ENCODE measurements at regions of chr9 and their contacts with region 1.

Region 1: DNA sequence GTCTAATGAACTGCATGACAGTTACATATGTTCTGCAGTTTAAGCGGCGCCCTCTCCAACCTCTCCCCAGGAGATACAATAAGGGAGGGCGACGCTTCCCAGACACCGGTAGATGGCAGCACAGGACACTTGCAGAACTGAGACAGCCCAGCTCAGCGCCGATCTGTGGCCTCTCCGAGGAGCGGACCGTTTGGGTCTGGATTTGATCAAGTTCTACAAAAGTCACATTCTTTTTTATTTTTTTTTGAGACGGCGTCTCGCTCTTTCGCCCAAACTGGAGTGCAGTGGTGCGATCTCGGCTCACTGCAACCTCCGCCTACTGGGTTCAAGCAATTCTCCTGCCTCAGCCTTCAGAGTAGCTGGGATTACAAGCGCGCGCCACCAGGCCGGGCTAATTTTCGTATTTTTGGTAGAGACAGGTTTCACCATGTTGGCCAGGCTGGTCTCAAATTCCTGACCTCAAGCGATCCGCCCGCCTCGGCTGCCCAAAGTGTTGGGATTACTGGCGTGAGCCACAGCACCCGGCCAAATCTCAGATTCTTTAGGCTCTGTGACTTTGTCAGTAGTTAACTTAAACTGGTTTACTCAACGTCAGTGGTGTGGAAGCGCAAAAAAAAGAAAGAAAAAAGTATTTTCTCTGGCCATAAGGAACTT is 1.4 kb upstream of the ATOSB start:
- DNase-seq: peak; percentile 81
- H3K4me3 ChIP-seq: peak overlapping the region; percentile 76 to 85
- H3K27ac ChIP-seq: peak overlapping the region in 1 of 2 experiments; percentile 97; a peak in 1 of 4 replicates
- H3K4me1 ChIP-seq: peaks cover 23 to 29% of the 10 kb centered on the region in 2 experiments
- H3K27me3 ChIP-seq: no peaks in the 10 kb centered on the region
- CTCF ChIP-seq: peak; percentile 97
- EP300 ChIP-seq: no peak
- RAD21 ChIP-seq: peak; percentile 93

Region 2: DNA sequence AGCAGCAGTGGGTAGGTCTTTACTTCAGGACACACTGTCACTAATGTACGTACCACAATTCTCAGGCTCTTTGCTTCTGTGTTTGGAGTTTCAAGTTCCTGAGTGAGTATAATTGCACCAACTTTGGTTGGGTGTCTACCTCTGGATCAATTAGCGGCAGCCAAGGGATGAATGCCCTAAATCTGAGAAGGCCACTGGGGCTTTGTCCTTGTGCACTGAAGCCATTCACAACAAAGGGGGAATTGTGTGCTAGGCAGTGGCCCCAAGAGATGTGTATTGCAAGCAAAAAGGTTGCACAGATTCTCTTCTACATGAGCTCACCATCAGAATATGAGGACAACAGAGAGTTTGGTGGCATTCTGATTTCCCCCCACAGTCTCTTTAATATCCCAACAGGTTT is 162.8 kb before region 1 on chr9:
- CTCF ChIA-PET with region 1: no interaction called
- POLR2A ChIA-PET with region 1: no interaction called
- DNase-seq: no peak
- H3K4me3 ChIP-seq: no peak overlapping the region
- H3K27ac ChIP-seq: no peak overlapping the region
- H3K4me1 ChIP-seq: peaks cover 0 to 3% of the 10 kb centered on the region in 2 experiments; a peak in 1 of 4 replicates
- H3K27me3 ChIP-seq: peaks cover 29% of the 10 kb centered on the region
- CTCF ChIP-seq: no peak
- EP300 ChIP-seq: no peak
- RAD21 ChIP-seq: no peak

Region 3: GRCh38 chr9:35102926-35103659 is 13.9 kb before region 1 on chr9 and contains the start of gene STOML2:
- CTCF ChIA-PET with region 1: interaction called, 13 read pairs
- POLR2A ChIA-PET with region 1: interaction called, 35 read pairs
- DNase-seq: peak; percentile 96
- H3K4me3 ChIP-seq: peak within 1 kb of the TSS; percentile 75 to 84
- H3K27ac ChIP-seq: peak within 1 kb of the TSS; percentile 86 to 94
- H3K4me1 ChIP-seq: peaks cover 15 to 25% of the 10 kb centered on the region in 2 experiments; a peak in 3 of 4 replicates
- H3K27me3 ChIP-seq: no peaks in the 10 kb centered on the region
- CTCF ChIP-seq: no peak
- EP300 ChIP-seq: no peak; a peak in 1 of 4 replicates
- RAD21 ChIP-seq: no peak
- polyA plus RNA-seq, gene STOML2: 229 and 232 TPM in 2 replicates

Region 4: GRCh38 chr9:35142037-35142436 is 25.0 kb after region 1 on chr9:
- CTCF ChIA-PET with region 1: no interaction called
- POLR2A ChIA-PET with region 1: no interaction called
- DNase-seq: no peak
- H3K4me3 ChIP-seq: no peak overlapping the region
- H3K27ac ChIP-seq: no peak overlapping the region
- H3K4me1 ChIP-seq: no peaks in the 10 kb centered on the region
- H3K27me3 ChIP-seq: no peaks in the 10 kb centered on the region
- CTCF ChIP-seq: no peak
- EP300 ChIP-seq: no peak
- RAD21 ChIP-seq: no peak

Region 5: DNA sequence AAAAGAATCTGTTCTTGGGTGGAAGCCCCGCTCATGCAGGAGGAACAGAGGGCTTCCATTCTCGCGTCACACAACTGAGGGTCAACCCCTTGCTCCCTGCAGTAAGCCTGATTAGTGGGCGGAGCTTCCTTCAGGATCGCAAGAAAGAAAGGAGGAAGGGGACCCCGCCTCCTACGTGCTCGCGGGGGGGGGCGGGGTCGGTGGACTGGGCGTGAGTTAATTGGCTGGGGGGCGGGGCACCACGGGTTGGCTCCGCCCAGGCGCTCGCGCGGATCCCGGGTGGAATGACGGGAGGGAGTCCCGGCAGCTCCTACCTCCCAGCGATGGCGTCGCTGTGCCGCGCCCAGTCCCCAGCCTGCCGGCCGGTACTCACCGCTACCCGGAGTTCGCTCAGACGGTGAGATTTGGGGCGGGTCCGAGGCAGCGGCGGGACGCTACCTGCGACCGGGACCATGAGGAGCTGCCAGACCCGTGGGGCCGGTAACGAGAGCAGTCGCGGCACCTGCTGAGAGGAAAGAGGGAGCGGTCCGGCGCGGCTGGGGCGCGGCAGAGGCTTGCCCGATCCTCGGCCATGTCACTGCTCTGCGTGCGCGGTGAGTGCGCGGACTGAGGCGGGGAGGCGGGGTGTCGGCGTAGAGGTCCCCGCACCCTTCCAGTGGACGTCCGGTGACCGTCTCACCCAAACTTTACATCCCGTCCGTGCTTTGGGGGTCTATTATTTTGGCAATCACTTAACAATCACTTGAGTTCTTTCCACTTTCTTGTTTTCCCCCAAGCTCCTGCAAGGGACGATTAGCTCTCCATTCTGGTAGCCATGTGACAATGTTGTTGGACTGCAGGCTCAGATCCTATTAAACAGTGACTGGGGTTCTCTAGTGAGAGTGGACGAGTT is 44.9 kb after region 1 on chr9 and contains the start of gene UNC13B:
- CTCF ChIA-PET with region 1: interaction called, 14 read pairs
- POLR2A ChIA-PET with region 1: interaction called, 8 read pairs
- DNase-seq: peak; percentile 99
- H3K4me3 ChIP-seq: peak within 1 kb of the TSS; percentile 70 to 86
- H3K27ac ChIP-seq: peak within 1 kb of the TSS; percentile 46 to 88; a peak in 3 of 4 replicates
- H3K4me1 ChIP-seq: peaks cover 3 to 5% of the 10 kb centered on the region in 2 experiments; a peak in 1 of 4 replicates
- H3K27me3 ChIP-seq: no peaks in the 10 kb centered on the region
- CTCF ChIP-seq: no peak; the same call in 1 of the 2 replicates
- EP300 ChIP-seq: no peak
- RAD21 ChIP-seq: no peak
- polyA plus RNA-seq, gene UNC13B: 8.1 and 9.8 TPM in 2 replicates

Region 6: GRCh38 chr9:35258676-35259474 is 141.8 kb after region 1 on chr9:
- CTCF ChIA-PET with region 1: interaction called, 55 read pairs
- POLR2A ChIA-PET with region 1: no interaction called
- DNase-seq: peak; percentile 42
- H3K4me3 ChIP-seq: no peak overlapping the region
- H3K27ac ChIP-seq: no peak overlapping the region
- H3K4me1 ChIP-seq: no peaks in the 10 kb centered on the region
- H3K27me3 ChIP-seq: no peaks in the 10 kb centered on the region
- CTCF ChIP-seq: peak; percentile 72
- EP300 ChIP-seq: no peak
- RAD21 ChIP-seq: peak; percentile 83

Region 7: GRCh38 chr9:35415386-35416096 is 298.5 kb after region 1 on chr9:
- CTCF ChIA-PET with region 1: interaction called, 11 read pairs
- POLR2A ChIA-PET with region 1: no interaction called
- DNase-seq: no peak
- H3K4me3 ChIP-seq: no peak overlapping the region
- H3K27ac ChIP-seq: no peak overlapping the region
- H3K4me1 ChIP-seq: no peaks in the 10 kb centered on the region
- H3K27me3 ChIP-seq: no peaks in the 10 kb centered on the region
- CTCF ChIP-seq: no peak; the same call in 1 of the 2 replicates
- EP300 ChIP-seq: no peak
- RAD21 ChIP-seq: no peak

Region 8: DNA sequence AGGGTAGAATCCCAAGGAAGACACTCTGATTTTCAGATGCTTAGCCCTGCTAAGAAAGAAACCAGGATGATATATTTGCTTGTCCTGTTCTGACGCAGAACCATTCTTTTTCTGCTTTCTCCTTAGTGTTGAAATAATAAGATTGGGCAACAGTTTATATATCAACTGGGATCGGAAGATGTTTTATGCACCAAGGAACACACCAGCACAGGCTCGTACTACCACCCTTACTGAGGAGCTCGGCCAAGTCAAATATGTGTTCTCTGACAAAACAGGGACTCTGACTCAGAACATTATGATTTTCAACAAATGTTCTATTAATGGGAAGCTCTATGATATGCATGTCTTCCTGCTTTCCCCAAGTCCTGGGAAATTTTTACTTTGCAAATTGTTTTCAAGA is 353.9 kb after region 1 on chr9:
- CTCF ChIA-PET with region 1: interaction called, 48 read pairs
- POLR2A ChIA-PET with region 1: no interaction called
- DNase-seq: no peak
- H3K4me3 ChIP-seq: no peak overlapping the region
- H3K27ac ChIP-seq: 0 out of 4 replicates have a peak overlapping the region, but pooled peaks of 1 of the 2 experiments have one; percentile 34
- H3K4me1 ChIP-seq: no peaks in the 10 kb centered on the region
- H3K27me3 ChIP-seq: no peaks in the 10 kb centered on the region; the same call in 1 of the 2 replicates
- CTCF ChIP-seq: no peak
- EP300 ChIP-seq: no peak
- RAD21 ChIP-seq: no peak

Region 9: GRCh38 chr9:35476596-35476995 is 359.6 kb after region 1 on chr9:
- CTCF ChIA-PET with region 1: interaction called, 48 read pairs
- POLR2A ChIA-PET with region 1: no interaction called
- DNase-seq: no peak
- H3K4me3 ChIP-seq: no peak overlapping the region
- H3K27ac ChIP-seq: no peak overlapping the region
- H3K4me1 ChIP-seq: no peaks in the 10 kb centered on the region
- H3K27me3 ChIP-seq: no peaks in the 10 kb centered on the region
- CTCF ChIP-seq: no peak
- EP300 ChIP-seq: no peak
- RAD21 ChIP-seq: no peak